B cell (primary cell): ENCODE measurements at regions of chr5 and their contacts with region 1.

Region 1: GRCh38 chr5:176447982-176448608 is at the start of gene FAF2:
- DNase-seq: peak; percentile 99
- ATAC-seq: peak; percentile 91
- H3K4me3 ChIP-seq: peak within 1 kb of the TSS; percentile 77 to 99 (median 99)
- H3K4me3 Mint-ChIP-seq: peak within 1 kb of the TSS; percentile 98
- H3K27ac ChIP-seq: peak within 1 kb of the TSS; percentile 81 to 93
- H3K27ac Mint-ChIP-seq: peak within 1 kb of the TSS; percentile 99
- H3K4me1 ChIP-seq: peaks cover 16 to 20% of the 10 kb centered on the region in 2 donors
- H3K4me1 Mint-ChIP-seq: peaks cover 32% of the 10 kb centered on the region
- H3K27me3 ChIP-seq: no peaks in the 10 kb centered on the region
- H3K27me3 Mint-ChIP-seq: no peaks in the 10 kb centered on the region
- CTCF ChIP-seq: peak; percentile 92
- total RNA-seq, gene FAF2: 35.1 and 41.3 TPM in 2 replicates

Region 2: GRCh38 chr5:176337913-176338312 is 110.2 kb before region 1 on chr5:
- CTCF ChIA-PET with region 1: no interaction called
- POLR2A ChIA-PET with region 1: no interaction called
- intact Hi-C with region 1: no loop called
- DNase-seq: no peak
- ATAC-seq: no peak
- H3K4me3 ChIP-seq: no peak overlapping the region
- H3K4me3 Mint-ChIP-seq: no peak overlapping the region
- H3K27ac ChIP-seq: no peak overlapping the region
- H3K27ac Mint-ChIP-seq: no peak overlapping the region
- H3K4me1 ChIP-seq: no peaks in the 10 kb centered on the region
- H3K4me1 Mint-ChIP-seq: no peaks in the 10 kb centered on the region
- H3K27me3 ChIP-seq: no peaks in the 10 kb centered on the region
- H3K27me3 Mint-ChIP-seq: no peaks in the 10 kb centered on the region
- CTCF ChIP-seq: no peak

Region 3: DNA sequence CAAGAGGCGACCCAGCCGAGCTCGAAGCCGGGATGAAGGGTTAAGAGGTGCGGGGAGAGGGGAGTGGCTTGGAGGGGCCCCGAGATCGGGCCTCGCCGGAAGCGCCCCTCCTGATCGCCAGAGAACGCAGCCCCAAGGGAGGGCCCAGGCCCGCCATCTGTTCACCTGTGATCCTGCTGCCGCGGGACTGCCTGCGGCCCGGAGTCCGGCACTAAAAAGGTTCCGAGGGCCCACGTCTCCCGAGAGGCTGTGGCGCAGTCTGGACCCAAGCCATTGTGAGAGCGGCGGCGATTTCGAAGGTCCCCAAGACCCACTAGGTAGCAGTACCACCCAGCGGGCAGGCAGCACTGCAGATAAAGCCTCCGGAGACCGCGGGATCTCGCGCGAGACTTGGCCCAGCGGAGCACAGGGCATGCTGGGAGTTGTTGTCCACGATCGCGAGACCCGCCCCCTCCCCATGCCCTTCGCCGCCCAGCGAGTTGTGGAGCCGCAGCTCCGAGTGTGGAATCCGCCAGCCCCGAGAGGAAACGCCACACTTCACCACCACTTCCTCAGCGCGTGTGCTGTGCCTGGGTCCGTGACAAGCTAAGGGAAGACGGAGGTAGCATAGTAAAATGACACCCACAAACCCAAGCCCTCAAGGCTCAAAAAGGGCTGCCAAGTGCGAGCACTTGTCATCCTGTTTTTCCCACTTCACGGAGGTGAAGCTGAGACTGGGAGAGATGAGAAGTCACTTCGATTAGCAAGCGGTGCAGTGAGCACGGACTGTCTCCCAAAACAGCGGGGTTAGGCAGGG is 86.5 kb before region 1 on chr5 and contains the start of gene KIAA1191:
- CTCF ChIA-PET with region 1: interaction called, 6 read pairs
- POLR2A ChIA-PET with region 1: no interaction called
- intact Hi-C with region 1: loop called (anchors 1 kb)
- DNase-seq: peak; percentile 96
- ATAC-seq: peak; percentile 87
- H3K4me3 ChIP-seq: peak within 1 kb of the TSS; percentile 47 to 94 (median 82)
- H3K4me3 Mint-ChIP-seq: peak within 1 kb of the TSS; percentile 98
- H3K27ac ChIP-seq: peak within 1 kb of the TSS; percentile 77 to 92
- H3K27ac Mint-ChIP-seq: peak within 1 kb of the TSS; percentile 98
- H3K4me1 ChIP-seq: peaks cover 21 to 36% of the 10 kb centered on the region in 2 donors
- H3K4me1 Mint-ChIP-seq: peaks cover 42% of the 10 kb centered on the region
- H3K27me3 ChIP-seq: no peaks in the 10 kb centered on the region
- H3K27me3 Mint-ChIP-seq: no peaks in the 10 kb centered on the region
- CTCF ChIP-seq: peak; percentile 31
- total RNA-seq, gene KIAA1191: 82.9 and 88.1 TPM in 2 replicates

Region 4: GRCh38 chr5:176469251-176469650 is 21.2 kb after region 1 on chr5:
- CTCF ChIA-PET with region 1: no interaction called
- POLR2A ChIA-PET with region 1: no interaction called
- intact Hi-C with region 1: no loop called
- DNase-seq: no peak
- ATAC-seq: no peak
- H3K4me3 ChIP-seq: no peak overlapping the region
- H3K4me3 Mint-ChIP-seq: no peak overlapping the region
- H3K27ac ChIP-seq: no peak overlapping the region
- H3K27ac Mint-ChIP-seq: no peak overlapping the region
- H3K4me1 ChIP-seq: no peaks in the 10 kb centered on the region
- H3K4me1 Mint-ChIP-seq: peaks cover 11% of the 10 kb centered on the region
- H3K27me3 ChIP-seq: no peaks in the 10 kb centered on the region
- H3K27me3 Mint-ChIP-seq: no peaks in the 10 kb centered on the region
- CTCF ChIP-seq: no peak